Activated naive CD8-positive, alpha-beta T cell treated with anti-CD3 and anti-CD28 coated beads, Interleukin-2, amount 10 ng/mL, durations not matched to agents 7 days and 5 days (primary cell): ENCODE measurements at regions of chr6 and their contacts with region 1.

Region 1: DNA sequence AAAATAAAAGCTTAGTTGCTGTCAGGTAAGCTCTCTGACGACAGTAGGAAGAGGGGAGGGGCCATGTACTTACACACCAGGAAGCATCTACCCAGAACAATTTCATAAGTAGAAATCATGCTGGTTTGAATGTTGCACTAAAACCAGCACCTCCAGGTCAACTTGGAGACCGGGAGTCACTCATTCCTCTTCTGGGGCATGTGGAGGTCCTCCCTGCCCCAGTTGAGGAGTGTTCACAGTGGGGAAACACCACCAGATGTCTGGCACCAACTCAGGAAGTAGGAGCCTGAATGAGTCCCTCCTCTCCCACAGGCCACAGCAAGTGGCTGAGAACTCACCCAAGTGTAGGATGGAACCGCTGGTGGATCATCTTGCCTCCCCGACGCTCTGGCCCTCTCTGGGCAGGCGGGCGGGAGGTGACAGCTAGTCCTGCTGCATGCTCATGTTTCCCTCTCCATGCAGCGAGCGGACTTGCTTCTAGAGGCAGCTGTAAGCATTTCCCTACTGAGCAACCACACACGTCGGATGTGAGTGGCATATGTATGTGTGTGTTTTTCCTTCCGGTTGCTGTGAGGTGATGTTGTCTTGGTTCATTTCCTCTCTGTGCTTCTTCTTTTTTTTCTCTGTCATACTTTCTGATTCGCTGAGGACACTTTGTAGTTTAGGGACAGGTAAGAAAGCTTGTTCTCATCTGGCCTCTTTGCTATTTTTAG is 149.5 kb upstream of the NEDD9 start:
- DNase-seq: peak; percentile 74
- ATAC-seq: peak; percentile 96
- H3K4me3 Mint-ChIP-seq: peak overlapping the region; percentile 90
- H3K27ac Mint-ChIP-seq: peak overlapping the region; percentile 91
- H3K4me1 Mint-ChIP-seq: peaks cover 50% of the 10 kb centered on the region
- H3K27me3 Mint-ChIP-seq: no peaks in the 10 kb centered on the region

Region 2: DNA sequence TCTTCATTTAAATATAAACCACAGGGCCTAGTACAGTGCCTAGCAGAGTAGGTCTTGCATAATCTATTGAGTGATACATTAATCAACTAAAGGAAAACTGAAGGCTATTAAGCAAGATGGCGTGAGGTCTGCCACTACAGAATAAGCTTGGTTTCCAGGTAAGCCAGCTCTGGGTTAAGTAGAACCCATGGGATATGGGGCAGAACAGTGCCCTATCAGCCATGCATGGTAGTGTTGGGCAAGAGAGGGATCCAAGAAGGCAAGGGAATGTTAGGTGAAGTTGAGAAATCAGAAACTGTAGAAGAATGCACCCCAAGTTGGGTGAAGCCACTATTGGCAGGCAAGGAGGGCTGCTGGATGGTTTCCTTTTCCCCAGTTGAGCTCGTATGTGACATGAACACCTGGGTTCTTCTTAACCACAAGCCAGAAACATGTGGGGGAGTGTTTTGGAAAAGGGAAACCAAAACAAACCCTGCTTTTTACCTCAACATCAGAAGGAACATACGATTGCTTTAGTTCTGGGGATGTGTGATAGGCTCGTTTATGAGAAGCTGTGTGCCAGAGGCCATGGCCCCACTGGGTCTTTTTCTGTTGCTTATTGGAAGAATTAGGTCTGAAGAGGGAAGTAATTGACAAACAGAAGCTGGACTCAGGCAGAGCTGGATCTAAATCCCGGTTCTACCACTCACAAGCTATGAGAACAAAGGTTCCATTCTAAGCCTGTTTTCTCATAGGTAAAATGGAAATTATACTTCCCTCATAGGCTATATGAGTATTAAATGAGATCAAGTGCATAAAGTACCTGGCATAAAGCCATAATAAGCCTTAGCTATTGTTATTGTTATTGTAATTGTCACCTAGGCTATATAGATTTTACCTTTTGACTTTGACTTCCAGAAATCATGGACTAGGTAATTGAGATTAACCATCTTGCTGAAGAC is 183.0 kb before region 1 on chr6:
- POLR2A ChIA-PET with region 1: interaction called, 10 read pairs
- DNase-seq: peak; percentile 51
- ATAC-seq: peak; percentile 76
- H3K4me3 Mint-ChIP-seq: peak overlapping the region; percentile 78
- H3K27ac Mint-ChIP-seq: peak overlapping the region; percentile 96
- H3K4me1 Mint-ChIP-seq: peaks cover 66% of the 10 kb centered on the region
- H3K27me3 Mint-ChIP-seq: no peaks in the 10 kb centered on the region

Region 3: GRCh38 chr6:11232193-11232769 is 149.7 kb before region 1 on chr6 and contains the start of gene NEDD9:
- POLR2A ChIA-PET with region 1: interaction called, 30 read pairs
- DNase-seq: peak; percentile 88
- ATAC-seq: peak; percentile 97
- H3K4me3 Mint-ChIP-seq: peak within 1 kb of the TSS; percentile 87
- H3K27ac Mint-ChIP-seq: peak within 1 kb of the TSS; percentile 95
- H3K4me1 Mint-ChIP-seq: peaks cover 54% of the 10 kb centered on the region
- H3K27me3 Mint-ChIP-seq: no peaks in the 10 kb centered on the region
- total RNA-seq, gene NEDD9: 72.2 to 80.8 TPM

Region 4: GRCh38 chr6:11258260-11259237 is 123.4 kb before region 1 on chr6:
- POLR2A ChIA-PET with region 1: interaction called, 15 read pairs
- DNase-seq: peak; percentile 48
- ATAC-seq: peak; percentile 97
- H3K4me3 Mint-ChIP-seq: peak overlapping the region; percentile 63
- H3K27ac Mint-ChIP-seq: peak overlapping the region; percentile 89
- H3K4me1 Mint-ChIP-seq: peaks cover 54% of the 10 kb centered on the region
- H3K27me3 Mint-ChIP-seq: no peaks in the 10 kb centered on the region

Region 5: GRCh38 chr6:11366183-11366933 is 15.6 kb before region 1 on chr6:
- POLR2A ChIA-PET with region 1: interaction called, 14 read pairs
- DNase-seq: no peak
- ATAC-seq: peak; percentile 77
- H3K4me3 Mint-ChIP-seq: peak overlapping the region; percentile 44
- H3K27ac Mint-ChIP-seq: peak overlapping the region; percentile 83
- H3K4me1 Mint-ChIP-seq: peaks cover 61% of the 10 kb centered on the region
- H3K27me3 Mint-ChIP-seq: no peaks in the 10 kb centered on the region

Region 6: GRCh38 chr6:11412011-11412424 is 30.1 kb after region 1 on chr6:
- POLR2A ChIA-PET with region 1: interaction called, 12 read pairs
- DNase-seq: no peak
- ATAC-seq: no peak
- H3K4me3 Mint-ChIP-seq: peak overlapping the region; percentile 51
- H3K27ac Mint-ChIP-seq: peak overlapping the region; percentile 71
- H3K4me1 Mint-ChIP-seq: peaks cover 48% of the 10 kb centered on the region
- H3K27me3 Mint-ChIP-seq: no peaks in the 10 kb centered on the region

Region 7: GRCh38 chr6:11595903-11596302 is 213.9 kb after region 1 on chr6:
- POLR2A ChIA-PET with region 1: no interaction called
- DNase-seq: no peak
- ATAC-seq: no peak
- H3K4me3 Mint-ChIP-seq: no peak overlapping the region
- H3K27ac Mint-ChIP-seq: no peak overlapping the region
- H3K4me1 Mint-ChIP-seq: no peaks in the 10 kb centered on the region
- H3K27me3 Mint-ChIP-seq: peaks cover 3% of the 10 kb centered on the region